ENCODE measurements at regions of chr12 and their contacts with region 1.

Region 1: GRCh38 chr12:104593482-104593881 is 136.7 kb downstream of the CHST11 start:
- DNase-seq: no peak
- ATAC-seq: no peak
- H3K4me3 ChIP-seq: no peak overlapping the region
- H3K27ac ChIP-seq: no peak overlapping the region
- H3K4me1 ChIP-seq: no peaks in the 10 kb centered on the region
- H3K27me3 ChIP-seq: no peaks in the 10 kb centered on the region
- CTCF ChIP-seq: no peak

Region 2: DNA sequence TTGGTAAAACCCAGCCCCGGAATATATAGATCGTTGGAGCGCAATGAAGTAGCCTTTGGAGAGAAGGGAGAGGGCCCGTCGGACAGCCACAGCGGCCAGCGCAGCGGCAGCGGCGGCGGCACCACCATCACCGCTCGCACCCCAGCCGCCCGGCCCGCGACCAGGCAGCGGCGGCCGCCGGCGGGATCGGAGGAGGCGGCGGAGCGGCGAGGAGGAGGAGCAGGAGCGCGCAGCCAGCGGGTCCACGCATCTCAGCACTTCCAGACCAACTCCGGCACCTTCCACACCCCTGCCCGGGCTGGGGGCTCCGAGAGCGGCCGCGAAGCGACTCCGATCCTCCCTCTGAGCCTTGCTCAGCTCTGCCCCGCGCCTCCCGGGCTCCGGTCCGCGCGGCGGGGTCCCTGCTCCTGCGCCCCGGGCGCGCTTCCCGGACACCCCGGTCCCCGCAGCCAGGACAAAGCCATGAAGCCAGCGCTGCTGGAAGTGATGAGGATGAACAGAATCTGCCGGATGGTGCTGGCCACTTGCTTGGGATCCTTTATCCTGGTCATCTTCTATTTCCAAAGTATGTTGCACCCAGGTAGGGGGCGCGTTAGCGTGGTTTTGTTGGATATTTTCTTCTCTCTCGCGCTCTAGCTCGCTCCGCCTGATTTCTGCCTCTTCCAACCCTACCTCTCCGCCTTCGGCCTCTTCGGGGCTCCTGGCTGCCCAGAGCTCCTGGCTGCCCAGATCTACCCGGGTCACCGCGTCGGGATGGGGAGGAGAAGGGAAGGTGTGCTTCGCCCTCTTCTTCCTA is 136.3 kb before region 1 on chr12:
- CTCF ChIA-PET with region 1: interaction called, 14 read pairs
- POLR2A ChIA-PET with region 1: no interaction called
- in situ Hi-C with region 1: no loop called
- intact Hi-C with region 1: no loop called
- DNase-seq: no peak
- ATAC-seq: peak; percentile 66
- H3K4me3 ChIP-seq: peak overlapping the region; percentile 55 to 61
- H3K27ac ChIP-seq: peak overlapping the region; percentile 78
- H3K4me1 ChIP-seq: peaks cover 11% of the 10 kb centered on the region
- H3K27me3 ChIP-seq: peaks cover 6% of the 10 kb centered on the region; the same call in 1 of the 2 replicates
- CTCF ChIP-seq: peak; percentile 69

Region 3: DNA sequence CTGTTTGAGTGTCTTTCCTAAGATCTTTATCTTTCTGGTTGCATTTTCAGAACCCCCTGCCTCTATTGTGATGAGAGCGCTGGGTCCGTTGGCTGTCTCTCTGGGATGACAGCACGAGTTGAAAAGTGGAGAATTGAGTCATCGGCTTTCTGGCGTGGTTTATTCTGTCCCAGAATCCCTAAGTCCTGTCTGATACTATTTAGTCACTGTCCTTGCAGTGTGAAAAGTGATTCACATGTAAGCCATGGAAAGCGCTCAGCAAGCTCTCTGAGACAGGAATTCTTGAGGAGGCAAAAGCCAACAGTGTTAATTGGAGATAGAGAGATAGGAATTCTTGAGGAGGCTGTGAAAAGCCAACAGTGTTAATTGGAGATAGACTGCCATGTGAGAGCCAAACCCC is 15.0 kb before region 1 on chr12:
- CTCF ChIA-PET with region 1: no interaction called
- POLR2A ChIA-PET with region 1: no interaction called
- in situ Hi-C with region 1: no loop called
- intact Hi-C with region 1: no loop called
- DNase-seq: no peak
- ATAC-seq: no peak
- H3K4me3 ChIP-seq: no peak overlapping the region
- H3K27ac ChIP-seq: no peak overlapping the region
- H3K4me1 ChIP-seq: no peaks in the 10 kb centered on the region
- H3K27me3 ChIP-seq: no peaks in the 10 kb centered on the region
- CTCF ChIP-seq: no peak